ENCODE measurements at regions of chr13 and their contacts with region 1.

Region 1: DNA sequence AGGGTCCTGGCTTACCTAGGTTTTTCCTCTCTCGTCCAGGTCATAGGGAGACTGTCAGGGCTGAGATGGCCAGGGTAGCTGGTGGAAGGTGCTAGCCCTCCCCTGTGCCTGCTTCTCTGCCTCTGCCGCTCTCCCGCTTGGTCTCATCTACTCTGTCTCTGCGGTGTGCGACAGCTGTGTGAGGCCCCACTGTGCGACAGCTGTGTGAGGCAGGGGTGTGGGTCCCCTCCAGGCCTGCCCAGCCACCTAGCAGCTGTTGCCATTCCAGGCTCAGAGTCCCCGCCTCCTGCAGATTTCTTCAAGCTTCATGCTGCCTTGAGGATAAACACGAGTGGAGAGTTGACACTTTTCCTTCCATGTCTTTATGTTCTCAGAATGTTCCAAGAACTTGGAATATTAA is 53.0 kb downstream of the ARHGEF7 start:
- DNase-seq: no peak
- ATAC-seq: no peak
- H3K4me3 ChIP-seq: no peak overlapping the region
- H3K4me3 Mint-ChIP-seq: no peak overlapping the region
- H3K27ac ChIP-seq: no peak overlapping the region
- H3K27ac Mint-ChIP-seq: peak overlapping the region; percentile 58
- H3K4me1 ChIP-seq: peaks cover 28% of the 10 kb centered on the region
- H3K4me1 Mint-ChIP-seq: peaks cover 72% of the 10 kb centered on the region
- H3K27me3 ChIP-seq: no peaks in the 10 kb centered on the region
- H3K27me3 Mint-ChIP-seq: no peaks in the 10 kb centered on the region
- CTCF ChIP-seq: no peak

Region 2: GRCh38 chr13:110971486-110971885 is 196.6 kb before region 1 on chr13:
- CTCF ChIA-PET with region 1: no interaction called
- POLR2A ChIA-PET with region 1: no interaction called
- intact Hi-C with region 1: no loop called
- DNase-seq: no peak
- ATAC-seq: no peak
- H3K4me3 ChIP-seq: no peak overlapping the region
- H3K4me3 Mint-ChIP-seq: no peak overlapping the region
- H3K27ac ChIP-seq: no peak overlapping the region
- H3K27ac Mint-ChIP-seq: no peak overlapping the region
- H3K4me1 ChIP-seq: no peaks in the 10 kb centered on the region
- H3K4me1 Mint-ChIP-seq: no peaks in the 10 kb centered on the region
- H3K27me3 ChIP-seq: no peaks in the 10 kb centered on the region
- H3K27me3 Mint-ChIP-seq: peaks cover 16% of the 10 kb centered on the region
- CTCF ChIP-seq: no peak

Region 3: GRCh38 chr13:111153279-111153976 is 14.7 kb before region 1 on chr13:
- CTCF ChIA-PET with region 1: interaction called, 4 read pairs
- POLR2A ChIA-PET with region 1: interaction called, 3 read pairs
- intact Hi-C with region 1: loop called in 1 of 2 experiments (anchors 2 kb)
- DNase-seq: peak; percentile 86 to 96 (median 94)
- ATAC-seq: peak; percentile 81
- H3K4me3 ChIP-seq: peak overlapping the region; percentile 67 to 96
- H3K4me3 Mint-ChIP-seq: peak overlapping the region; percentile 96
- H3K27ac ChIP-seq: peak overlapping the region; percentile 75 to 79
- H3K27ac Mint-ChIP-seq: peak overlapping the region; percentile 96
- H3K4me1 ChIP-seq: peaks cover 20% of the 10 kb centered on the region
- H3K4me1 Mint-ChIP-seq: peaks cover 34% of the 10 kb centered on the region
- H3K27me3 ChIP-seq: no peaks in the 10 kb centered on the region
- H3K27me3 Mint-ChIP-seq: no peaks in the 10 kb centered on the region
- CTCF ChIP-seq: no peak